CD14-positive monocyte (primary cell): ENCODE measurements at regions of chr1 and their contacts with region 1.

Region 1: DNA sequence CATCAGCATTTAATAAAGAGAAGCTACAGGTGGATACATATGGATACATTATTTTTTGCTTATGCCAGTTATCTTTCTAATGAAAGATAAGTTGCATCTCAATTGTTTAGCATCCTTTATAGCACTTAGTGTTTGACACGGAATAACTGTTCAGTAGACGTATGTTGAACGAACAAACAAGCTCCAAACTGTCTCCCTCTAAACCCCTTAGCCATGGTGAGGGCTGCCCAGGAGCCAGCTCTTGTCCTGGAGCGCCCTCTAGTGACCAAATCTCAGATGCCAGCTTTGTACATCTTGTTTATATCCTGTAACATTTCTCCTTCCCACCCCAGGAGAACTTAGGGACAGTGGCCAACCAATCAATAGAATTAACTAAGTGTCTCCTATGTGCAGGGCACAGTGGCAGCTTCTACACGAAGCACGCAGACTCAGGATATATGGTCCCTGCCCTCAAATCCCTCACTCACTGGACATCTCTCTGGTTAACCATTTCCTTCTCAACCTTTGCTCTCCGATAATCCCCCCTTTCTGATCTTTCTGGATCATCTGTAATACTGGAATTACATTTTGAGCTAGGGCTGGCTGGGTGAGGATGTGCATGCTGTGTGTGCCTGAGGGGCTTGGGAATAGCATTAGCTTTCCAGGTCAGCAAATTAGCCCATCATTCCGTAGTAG is 22.9 kb downstream of the KCNA10 start:
- DNase-seq: peak; percentile 68 to 79 (median 71)
- H3K4me3 ChIP-seq: no peak overlapping the region
- H3K4me3 Mint-ChIP-seq: no peak overlapping the region
- H3K27ac ChIP-seq: no peak overlapping the region
- H3K27ac Mint-ChIP-seq: no peak overlapping the region
- H3K4me1 ChIP-seq: no peaks in the 10 kb centered on the region
- H3K4me1 Mint-ChIP-seq: peaks cover 12% of the 10 kb centered on the region
- H3K27me3 ChIP-seq: no peaks in the 10 kb centered on the region
- H3K27me3 Mint-ChIP-seq: peaks cover 3 to 5% (median 3%) of the 10 kb centered on the region in 3 donors
- CTCF ChIP-seq: peak; percentile 98

Region 2: GRCh38 chr1:110196917-110197765 is 298.9 kb before region 1 on chr1:
- intact Hi-C with region 1: loop called (anchors 2 to 5 kb)
- DNase-seq: peak; percentile 25 to 49 (median 43)
- H3K4me3 ChIP-seq: no peak overlapping the region
- H3K4me3 Mint-ChIP-seq: no peak overlapping the region
- H3K27ac ChIP-seq: no peak overlapping the region
- H3K27ac Mint-ChIP-seq: no peak overlapping the region
- H3K4me1 ChIP-seq: no peaks in the 10 kb centered on the region
- H3K4me1 Mint-ChIP-seq: no peaks in the 10 kb centered on the region
- H3K27me3 ChIP-seq: no peaks in the 10 kb centered on the region
- H3K27me3 Mint-ChIP-seq: peaks cover 0 to 3% (median 0%) of the 10 kb centered on the region in 3 donors
- CTCF ChIP-seq: peak; percentile 97

Region 3: GRCh38 chr1:110203021-110203661 is 292.9 kb before region 1 on chr1:
- intact Hi-C with region 1: loop called in 1 of 2 experiments (anchors 5 kb)
- DNase-seq: peak; percentile 56 to 68 (median 63)
- H3K4me3 ChIP-seq: no peak overlapping the region
- H3K4me3 Mint-ChIP-seq: no peak overlapping the region
- H3K27ac ChIP-seq: no peak overlapping the region
- H3K27ac Mint-ChIP-seq: peak overlapping the region in 3 of 7 donors; percentile 15 to 77 (median 62)
- H3K4me1 ChIP-seq: no peaks in the 10 kb centered on the region
- H3K4me1 Mint-ChIP-seq: peaks cover 4% of the 10 kb centered on the region
- H3K27me3 ChIP-seq: no peaks in the 10 kb centered on the region
- H3K27me3 Mint-ChIP-seq: peaks cover 0 to 4% (median 2%) of the 10 kb centered on the region in 3 donors
- CTCF ChIP-seq: peak; percentile 88

Region 4: GRCh38 chr1:110312188-110313121 is 183.6 kb before region 1 on chr1:
- intact Hi-C with region 1: loop called in 1 of 2 experiments (anchors 10 kb)
- DNase-seq: peak; percentile 62 to 75 (median 65)
- H3K4me3 ChIP-seq: no peak overlapping the region
- H3K4me3 Mint-ChIP-seq: no peak overlapping the region
- H3K27ac ChIP-seq: no peak overlapping the region
- H3K27ac Mint-ChIP-seq: no peak overlapping the region
- H3K4me1 ChIP-seq: peaks cover 3 to 9% of the 10 kb centered on the region in 2 donors
- H3K4me1 Mint-ChIP-seq: peaks cover 11% of the 10 kb centered on the region
- H3K27me3 ChIP-seq: no peaks in the 10 kb centered on the region
- H3K27me3 Mint-ChIP-seq: peaks cover 1 to 5% (median 2%) of the 10 kb centered on the region in 3 donors
- CTCF ChIP-seq: peak; percentile 95